ENCODE measurements at regions of chr6 and their contacts with region 1.

Region 1: GRCh38 chr6:113858480-113859348 is 1.6 kb downstream of the MARCKS start:
- DNase-seq: peak; percentile 87
- ATAC-seq: peak; percentile 83
- H3K4me3 ChIP-seq: peak overlapping the region; percentile 90
- H3K27ac ChIP-seq: peak overlapping the region; percentile 94
- H3K4me1 ChIP-seq: peaks cover 5% of the 10 kb centered on the region
- H3K27me3 ChIP-seq: no peaks in the 10 kb centered on the region
- CTCF ChIP-seq: peak; percentile 83 to 89 (median 88)
- EP300 ChIP-seq: peak; percentile 69 to 77; a peak in 3 of 4 replicates
- POLR2A ChIP-seq: peak; percentile 95
- RAD21 ChIP-seq: peak; percentile 86

Region 2: DNA sequence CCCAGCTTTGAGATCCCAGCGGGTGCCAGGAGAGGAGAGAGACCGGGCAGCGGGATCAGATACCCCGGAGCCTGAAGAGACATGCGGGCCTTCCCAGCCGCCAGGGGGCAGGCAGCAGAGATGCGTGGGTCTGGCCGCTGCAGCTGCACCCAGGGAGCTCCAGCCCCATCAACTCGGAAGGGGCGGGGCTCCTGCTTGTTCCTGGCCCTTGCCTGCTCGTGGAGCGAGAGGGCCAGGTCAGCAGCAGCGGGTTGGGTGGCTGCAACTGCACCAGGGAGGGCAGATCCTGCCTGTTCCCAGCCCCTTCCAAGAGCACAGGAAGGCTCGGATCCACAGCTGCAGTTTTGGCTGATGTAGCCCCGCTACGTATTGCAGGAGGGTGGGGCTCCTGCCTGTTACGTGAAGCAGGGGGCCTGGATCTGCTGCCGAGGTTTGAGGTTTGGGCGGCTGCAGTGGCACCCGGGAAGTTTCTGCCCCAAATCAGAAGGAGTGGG is 978.7 kb before region 1 on chr6:
- CTCF ChIA-PET with region 1: interaction called, 3 read pairs
- POLR2A ChIA-PET with region 1: no interaction called
- RAD21 ChIA-PET with region 1: interaction called, 10 read pairs
- SMC1A ChIA-PET with region 1: interaction called, 3 read pairs
- in situ Hi-C with region 1: no loop called
- intact Hi-C with region 1: no loop called
- DNase-seq: no peak
- ATAC-seq: peak; percentile 98
- H3K4me3 ChIP-seq: no peak overlapping the region
- H3K27ac ChIP-seq: no peak overlapping the region
- H3K4me1 ChIP-seq: no peaks in the 10 kb centered on the region
- H3K27me3 ChIP-seq: no peaks in the 10 kb centered on the region
- CTCF ChIP-seq: peak in 2 of 3 experiments; percentile 31 to 50; a peak in 3 of 6 replicates
- EP300 ChIP-seq: no peak
- POLR2A ChIP-seq: peak; percentile 24; the same call in 1 of the 2 replicates
- RAD21 ChIP-seq: peak; percentile 18; the same call in 1 of the 2 replicates

Region 3: DNA sequence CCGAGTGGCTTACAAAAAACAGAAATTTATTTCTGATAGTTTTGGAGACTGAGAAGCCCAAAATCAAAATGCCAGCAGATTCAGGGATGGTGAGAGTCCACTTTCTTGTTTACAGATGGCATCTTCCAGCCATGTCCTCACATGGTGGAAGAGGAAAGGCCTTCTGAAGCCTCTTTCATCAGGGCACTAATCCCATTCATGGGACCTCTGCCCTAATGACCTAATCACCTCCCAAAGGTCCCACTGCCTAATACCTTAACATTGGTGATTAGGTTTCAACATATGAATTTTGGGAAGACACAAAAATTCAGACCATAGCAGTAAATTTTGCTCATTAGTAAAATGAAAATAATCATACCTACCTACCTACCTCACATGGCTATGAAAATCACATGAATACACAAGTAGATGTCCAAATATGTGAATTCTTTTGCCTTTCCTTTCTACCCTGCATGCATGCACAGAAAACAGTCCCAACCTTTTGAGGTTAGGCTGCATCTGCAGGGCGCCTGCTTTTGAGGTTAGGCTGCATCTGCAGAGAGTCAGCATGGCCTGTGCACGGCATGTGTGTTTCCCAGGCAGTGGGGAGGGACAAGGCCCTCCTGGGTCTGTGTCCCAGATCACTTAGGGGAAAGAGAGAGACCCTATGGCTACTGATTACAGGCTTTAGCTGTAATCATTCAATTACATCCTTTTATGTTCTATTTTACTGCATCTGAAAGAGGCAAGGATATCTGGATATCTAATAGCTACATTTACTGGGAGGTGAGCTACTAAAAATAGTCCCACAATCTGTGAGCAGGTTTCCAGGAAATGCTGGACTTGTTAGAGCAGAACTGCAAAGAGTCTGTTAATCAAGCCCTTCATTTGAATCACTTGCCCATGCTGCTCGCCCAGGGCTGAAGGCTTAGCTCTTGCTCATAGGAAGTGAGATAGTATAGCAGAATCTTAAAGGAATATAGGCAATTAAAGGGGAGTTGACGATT is 499.3 kb before region 1 on chr6:
- CTCF ChIA-PET with region 1: no interaction called
- POLR2A ChIA-PET with region 1: no interaction called
- RAD21 ChIA-PET with region 1: no interaction called
- SMC1A ChIA-PET with region 1: interaction called, 4 read pairs
- in situ Hi-C with region 1: no loop called
- intact Hi-C with region 1: loop called (anchors 5 kb)
- DNase-seq: no peak
- ATAC-seq: peak; percentile 51; the same call in 2 of the 3 replicates
- H3K4me3 ChIP-seq: no peak overlapping the region
- H3K27ac ChIP-seq: no peak overlapping the region
- H3K4me1 ChIP-seq: no peaks in the 10 kb centered on the region
- H3K27me3 ChIP-seq: no peaks in the 10 kb centered on the region
- CTCF ChIP-seq: no peak
- EP300 ChIP-seq: no peak
- POLR2A ChIP-seq: no peak
- RAD21 ChIP-seq: no peak

Region 4: GRCh38 chr6:113654396-113654795 is 204.3 kb before region 1 on chr6:
- CTCF ChIA-PET with region 1: interaction called, 4 read pairs
- POLR2A ChIA-PET with region 1: interaction called, 10 read pairs
- RAD21 ChIA-PET with region 1: interaction called, 48 read pairs
- SMC1A ChIA-PET with region 1: interaction called, 10 read pairs
- in situ Hi-C with region 1: no loop called
- intact Hi-C with region 1: no loop called
- DNase-seq: no peak
- ATAC-seq: no peak
- H3K4me3 ChIP-seq: no peak overlapping the region
- H3K27ac ChIP-seq: peak overlapping the region; percentile 58; the same call in 1 of the 2 replicates
- H3K4me1 ChIP-seq: peaks cover 45% of the 10 kb centered on the region
- H3K27me3 ChIP-seq: no peaks in the 10 kb centered on the region
- CTCF ChIP-seq: no peak
- EP300 ChIP-seq: no peak
- POLR2A ChIP-seq: no peak
- RAD21 ChIP-seq: no peak

Region 5: DNA sequence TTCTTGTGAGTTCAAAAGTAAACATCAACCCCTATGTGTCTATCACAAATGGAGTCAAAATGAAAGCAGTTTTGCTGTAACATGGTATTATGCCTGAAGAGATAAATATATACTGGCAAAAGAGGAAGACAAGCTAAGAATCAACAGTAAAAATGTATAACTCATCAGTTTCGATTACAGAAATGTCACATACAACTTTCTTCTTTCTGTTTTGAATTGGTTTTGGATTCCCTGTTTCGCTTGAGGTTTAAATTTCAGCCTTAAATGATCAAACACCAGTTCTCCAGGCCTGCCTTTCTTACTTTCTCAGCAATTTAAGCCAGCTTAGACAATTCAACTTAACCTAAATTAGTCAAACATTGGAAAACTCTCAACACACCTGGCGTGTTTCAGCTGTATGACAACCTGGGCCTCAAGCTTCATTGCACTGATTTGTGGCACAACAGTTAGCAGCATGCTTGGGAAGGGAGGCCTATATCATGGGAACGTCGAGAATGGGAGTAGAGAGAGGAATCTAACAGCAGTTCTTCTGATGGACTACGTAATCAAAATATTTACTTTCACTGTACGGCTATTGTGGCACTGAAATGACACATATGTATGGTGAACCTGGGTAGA is 53.4 kb before region 1 on chr6:
- CTCF ChIA-PET with region 1: interaction called, 4 read pairs
- POLR2A ChIA-PET with region 1: interaction called, 17 read pairs
- RAD21 ChIA-PET with region 1: interaction called, 16 read pairs
- SMC1A ChIA-PET with region 1: interaction called, 15 read pairs
- in situ Hi-C with region 1: no loop called
- intact Hi-C with region 1: loop called (anchors 2 kb)
- DNase-seq: peak; percentile 71
- ATAC-seq: peak; percentile 92
- H3K4me3 ChIP-seq: peak overlapping the region; percentile 56; the same call in 1 of the 2 replicates
- H3K27ac ChIP-seq: peak overlapping the region; percentile 71; the same call in 1 of the 2 replicates
- H3K4me1 ChIP-seq: peaks cover 29% of the 10 kb centered on the region
- H3K27me3 ChIP-seq: no peaks in the 10 kb centered on the region
- CTCF ChIP-seq: no peak
- EP300 ChIP-seq: peak; percentile 45 to 83; a peak in 3 of 4 replicates
- POLR2A ChIP-seq: no peak
- RAD21 ChIP-seq: no peak

Region 6: DNA sequence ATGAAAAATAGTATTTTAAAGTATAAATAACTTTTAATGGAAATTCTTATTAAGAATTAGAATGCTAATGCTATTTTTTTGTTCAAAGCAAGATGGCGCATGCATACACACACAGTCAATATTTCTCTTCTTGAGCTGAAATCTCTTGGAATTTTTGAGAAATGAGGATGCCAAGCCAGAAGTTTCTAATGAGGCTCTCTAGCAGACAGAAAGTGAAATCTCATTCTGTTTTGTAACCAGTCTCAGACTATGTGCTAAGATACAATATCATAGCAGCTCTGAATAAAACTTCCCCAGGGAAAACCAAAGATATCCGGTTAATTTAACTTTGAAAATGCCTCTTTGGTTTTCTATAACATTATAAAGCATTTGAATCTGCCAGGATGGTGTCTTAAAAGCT is 209.4 kb after region 1 on chr6:
- CTCF ChIA-PET with region 1: no interaction called
- POLR2A ChIA-PET with region 1: no interaction called
- RAD21 ChIA-PET with region 1: no interaction called
- SMC1A ChIA-PET with region 1: no interaction called
- in situ Hi-C with region 1: no loop called
- intact Hi-C with region 1: no loop called
- DNase-seq: no peak
- ATAC-seq: no peak
- H3K4me3 ChIP-seq: no peak overlapping the region
- H3K27ac ChIP-seq: no peak overlapping the region
- H3K4me1 ChIP-seq: no peaks in the 10 kb centered on the region; the same call in none of the 2 replicates
- H3K27me3 ChIP-seq: no peaks in the 10 kb centered on the region
- CTCF ChIP-seq: no peak
- EP300 ChIP-seq: no peak
- POLR2A ChIP-seq: no peak
- RAD21 ChIP-seq: no peak

Measured in GM12878 (cell line).